Adrenal gland (tissue), 19 donors: ENCODE measurements at regions of chr17 and their contacts with region 1.

Region 1: GRCh38 chr17:7004398-7005253 is 7.8 kb upstream of the RNASEK start:
- DNase-seq: peak in 3 of 7 donors; percentile 29 to 38 (median 35)
- H3K4me3 ChIP-seq: no peak overlapping the region
- H3K27ac ChIP-seq: no peak overlapping the region
- H3K4me1 ChIP-seq: no peaks in the 10 kb centered on the region
- H3K27me3 ChIP-seq: no peaks in the 10 kb centered on the region
- CTCF ChIP-seq: peak; percentile 46 to 81 (median 74)
- POLR2A ChIP-seq: no peak

Region 2: DNA sequence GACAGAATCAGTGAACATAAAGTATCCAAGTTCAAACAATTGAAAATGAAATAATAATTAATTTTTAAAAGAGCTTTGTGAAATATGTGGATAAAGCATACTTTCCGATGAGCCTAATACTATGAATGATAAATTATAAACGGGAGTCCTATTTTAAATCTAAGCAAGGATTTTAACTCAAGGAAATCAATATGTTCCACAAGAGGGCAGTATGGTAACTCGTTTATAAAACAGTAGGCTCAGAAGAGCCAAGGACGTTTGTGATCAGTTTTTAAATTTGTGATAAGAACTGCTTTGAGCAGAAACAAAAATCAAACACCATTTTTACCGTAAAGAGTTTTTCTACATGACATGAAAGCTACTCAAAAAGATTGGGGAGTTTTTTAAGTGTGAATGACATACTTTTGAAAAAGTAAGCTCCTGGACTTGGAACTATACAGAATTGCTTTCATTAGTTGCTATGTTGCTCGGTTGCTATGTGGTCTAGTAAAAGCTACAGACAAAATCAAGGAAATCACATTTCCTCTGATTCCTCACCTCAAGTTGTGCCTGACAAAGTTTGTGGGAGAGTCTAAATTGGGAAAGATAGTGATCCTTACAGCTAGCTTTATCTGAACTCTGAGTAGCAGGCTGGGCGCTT is 161.3 kb before region 1 on chr17:
- intact Hi-C with region 1: loop called in 1 of 2 experiments (anchors 5 kb)
- DNase-seq: no peak
- H3K4me3 ChIP-seq: no peak overlapping the region
- H3K27ac ChIP-seq: no peak overlapping the region
- H3K4me1 ChIP-seq: peaks cover 0 to 5% of the 10 kb centered on the region in 2 donors
- H3K27me3 ChIP-seq: peaks cover 14% of the 10 kb centered on the region
- CTCF ChIP-seq: peak; percentile 33 to 62 (median 58)
- POLR2A ChIP-seq: no peak

Region 3: DNA sequence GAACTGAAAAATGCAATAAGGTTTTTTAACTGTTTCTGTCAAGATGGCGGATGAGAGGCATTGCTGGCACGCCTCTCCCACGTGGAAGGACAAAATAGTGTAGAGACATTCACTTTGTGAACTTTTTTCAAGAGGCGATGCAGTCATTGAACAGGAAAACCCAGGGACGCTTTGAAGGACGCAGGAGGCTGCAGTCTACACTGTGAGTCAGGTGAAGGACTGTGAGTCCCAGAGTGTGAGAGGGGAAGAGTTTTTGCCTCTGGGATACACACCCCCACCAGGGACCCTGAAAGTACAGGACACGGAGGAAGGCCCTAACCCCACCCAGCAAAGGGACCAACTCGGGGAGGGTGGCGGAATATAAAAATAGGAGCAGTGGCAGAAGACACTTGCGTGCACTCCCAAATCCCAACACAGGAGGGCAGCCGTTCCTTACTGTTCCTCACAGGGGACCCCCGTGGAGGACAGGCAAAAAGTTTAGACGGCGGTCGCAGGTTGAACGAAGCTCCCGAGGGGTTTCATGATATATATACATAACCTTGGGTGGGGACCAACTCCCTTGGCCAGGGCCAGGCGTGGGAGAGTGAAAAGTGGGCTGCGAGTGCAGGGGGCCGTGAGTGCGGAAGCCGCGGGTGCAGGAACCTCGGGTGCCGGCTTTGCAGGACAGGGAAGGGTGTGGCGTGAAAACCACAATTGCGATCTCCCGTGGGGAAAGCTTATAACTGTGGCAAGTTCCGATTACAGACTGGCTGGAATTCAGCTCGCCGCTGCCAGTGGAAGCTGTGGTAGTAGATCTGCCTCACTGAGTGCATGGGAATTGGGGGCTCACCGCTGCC is 90.8 kb before region 1 on chr17:
- intact Hi-C with region 1: loop called (anchors 5 kb)
- DNase-seq: peak; percentile 49 to 85 (median 74)
- H3K4me3 ChIP-seq: no peak overlapping the region
- H3K27ac ChIP-seq: no peak overlapping the region
- H3K4me1 ChIP-seq: peaks cover 0 to 5% of the 10 kb centered on the region in 2 donors
- H3K27me3 ChIP-seq: no peaks in the 10 kb centered on the region
- CTCF ChIP-seq: peak; percentile 68 to 93 (median 81)
- POLR2A ChIP-seq: no peak